BJ (cell line): ENCODE measurements at regions of chr12 and their contacts with region 1.

Region 1: DNA sequence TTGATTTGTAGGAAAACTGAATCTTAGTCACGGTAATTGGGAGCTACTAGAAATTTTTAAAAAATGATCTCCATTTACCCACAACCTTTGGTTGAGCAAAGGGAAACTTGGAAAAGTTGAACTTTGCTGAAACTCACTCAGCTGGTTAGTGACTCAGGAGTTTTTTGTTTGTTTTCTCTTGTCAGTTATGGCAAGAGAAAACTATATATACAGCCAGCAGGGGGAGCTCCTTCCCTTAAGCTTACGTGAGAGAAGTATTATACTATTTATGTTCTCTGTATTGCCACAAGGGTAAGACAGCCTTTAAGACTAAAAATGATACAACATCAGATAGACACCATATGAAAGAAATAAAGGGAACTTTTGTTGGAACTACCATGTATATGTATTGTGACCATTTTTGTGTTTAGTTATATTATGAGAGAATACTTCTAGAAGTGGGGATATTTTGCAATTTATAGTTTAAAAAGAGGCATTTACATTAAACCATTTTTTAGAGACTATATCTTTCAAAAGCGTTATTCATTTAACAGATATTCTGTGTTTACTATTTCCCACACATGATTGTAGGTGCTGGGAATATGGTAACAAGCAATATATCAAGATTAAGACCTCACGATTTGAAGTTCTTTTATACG is 28.1 kb upstream of the TBC1D30 start:
- DNase-seq: peak; percentile 56
- H3K4me3 ChIP-seq: no peak overlapping the region
- H3K27me3 ChIP-seq: peaks cover 6% of the 10 kb centered on the region
- CTCF ChIP-seq: peak; percentile 81

Region 2: DNA sequence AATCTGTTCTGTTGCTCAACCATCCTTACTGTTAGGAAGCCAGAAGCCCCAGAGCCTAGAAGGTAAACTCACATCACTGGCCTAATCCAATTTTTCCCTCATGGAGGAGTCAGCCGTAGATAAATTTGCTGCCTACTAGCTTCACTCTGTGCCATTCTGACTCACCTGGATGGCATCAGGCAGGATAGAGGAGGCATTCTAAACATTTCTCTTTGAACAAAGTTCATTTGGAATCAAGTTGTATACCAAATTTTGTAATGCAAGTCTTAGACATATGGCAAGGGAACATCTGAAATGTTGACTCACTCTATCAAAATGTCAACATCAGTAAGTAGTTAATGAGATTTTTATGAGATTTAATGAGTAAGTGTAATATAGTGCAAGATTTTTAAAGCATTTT is 14.5 kb after region 1 on chr12:
- CTCF ChIA-PET with region 1: interaction called, 14 read pairs
- POLR2A ChIA-PET with region 1: no interaction called
- DNase-seq: no peak
- H3K4me3 ChIP-seq: no peak overlapping the region
- H3K27me3 ChIP-seq: peaks cover 9% of the 10 kb centered on the region
- CTCF ChIP-seq: no peak

Region 3: GRCh38 chr12:65490250-65490649 is 693.9 kb after region 1 on chr12:
- CTCF ChIA-PET with region 1: no interaction called
- POLR2A ChIA-PET with region 1: no interaction called
- DNase-seq: no peak
- H3K4me3 ChIP-seq: no peak overlapping the region
- H3K27me3 ChIP-seq: no peaks in the 10 kb centered on the region
- CTCF ChIP-seq: no peak